Adrenal gland (tissue), 19 donors: ENCODE measurements at regions of chr11 and their contacts with region 1.

Region 1: GRCh38 chr11:68370211-68371111 is 58.1 kb downstream of the LRP5 start:
- DNase-seq: no peak
- H3K4me3 ChIP-seq: no peak overlapping the region
- H3K27ac ChIP-seq: peak overlapping the region in 2 of 5 donors; percentile 58 to 93
- H3K4me1 ChIP-seq: peaks cover 20 to 51% of the 10 kb centered on the region in 2 donors
- H3K27me3 ChIP-seq: no peaks in the 10 kb centered on the region
- CTCF ChIP-seq: no peak
- POLR2A ChIP-seq: no peak

Region 2: DNA sequence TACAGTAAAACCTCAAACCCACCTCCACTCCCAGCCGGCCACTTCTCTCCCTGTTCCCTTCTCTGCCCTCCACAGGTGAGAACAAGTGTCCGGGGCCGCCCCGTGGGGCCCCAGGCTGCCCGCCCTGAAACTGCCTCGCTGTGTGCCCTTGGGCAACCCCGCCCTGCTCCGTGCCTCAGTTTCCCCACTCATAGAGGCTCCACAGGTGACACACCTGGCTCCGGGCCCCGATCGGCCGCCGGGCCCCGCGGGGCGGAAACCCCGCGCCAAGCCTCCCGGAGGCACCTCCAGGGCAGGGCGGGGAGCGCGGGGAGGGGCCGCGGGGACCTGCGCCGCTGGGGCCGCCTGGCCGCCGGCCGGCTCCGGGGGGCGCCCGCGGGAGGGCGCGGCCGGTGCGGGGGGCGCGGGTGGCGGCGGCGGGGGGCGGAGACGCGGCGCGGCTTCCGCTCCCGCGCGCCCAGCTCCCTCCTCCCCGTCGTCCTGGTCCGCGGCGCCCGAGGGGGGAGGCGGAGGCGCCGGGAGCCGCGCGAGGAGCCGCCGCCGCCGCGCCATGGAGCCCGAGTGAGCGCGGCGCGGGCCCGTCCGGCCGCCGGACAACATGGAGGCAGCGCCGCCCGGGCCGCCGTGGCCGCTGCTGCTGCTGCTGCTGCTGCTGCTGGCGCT is 58.2 kb before region 1 on chr11 and contains the start of gene LRP5:
- intact Hi-C with region 1: loop called in 1 of 2 experiments (anchors 5 kb)
- DNase-seq: peak in 1 of 7 donors; percentile 37
- H3K4me3 ChIP-seq: peak within 1 kb of the TSS in 2 of 4 donors; percentile 26 to 97
- H3K27ac ChIP-seq: peak within 1 kb of the TSS in 3 of 5 donors; percentile 62 to 92 (median 91)
- H3K4me1 ChIP-seq: peaks cover 34 to 40% of the 10 kb centered on the region in 2 donors
- H3K27me3 ChIP-seq: no peaks in the 10 kb centered on the region
- CTCF ChIP-seq: no peak
- POLR2A ChIP-seq: peak in 1 of 2 donors; percentile 29
- total RNA-seq, gene LRP5: 10.7 to 277 (median 72.1) TPM